ENCODE measurements at regions of chrX and their contacts with region 1.

Region 1: GRCh38 chrX:57595381-57595811 is 3.6 kb downstream of the ZXDB start:
- DNase-seq: no peak

Region 2: DNA sequence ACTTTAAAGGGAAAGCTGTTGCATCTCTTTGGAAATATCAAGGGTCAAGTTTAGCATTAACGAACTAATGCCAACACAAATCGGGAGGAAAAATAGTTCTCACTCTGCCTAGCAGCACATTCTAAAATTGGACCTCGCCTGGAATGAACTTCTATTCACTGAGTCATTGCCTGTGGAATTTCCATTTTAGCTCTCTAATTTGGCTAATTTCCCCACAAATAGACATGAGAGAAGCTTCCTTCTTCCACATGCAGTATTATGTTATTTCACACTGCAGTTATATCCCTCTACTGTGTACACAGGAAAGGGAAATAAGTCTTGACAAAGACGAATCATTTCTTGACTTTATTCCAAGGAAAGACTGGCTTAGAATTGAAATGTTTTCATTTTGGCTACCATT is 305.6 kb after region 1 on chrX:
- intact Hi-C with region 1: loop called in 1 of 2 experiments (anchors 10 kb)
- DNase-seq: no peak